Activated CD4-positive, alpha-beta memory T cell treated with anti-CD3 and anti-CD28 coated beads for 36 hours (primary cell): ENCODE measurements at regions of chr11 and their contacts with region 1.

Region 1: DNA sequence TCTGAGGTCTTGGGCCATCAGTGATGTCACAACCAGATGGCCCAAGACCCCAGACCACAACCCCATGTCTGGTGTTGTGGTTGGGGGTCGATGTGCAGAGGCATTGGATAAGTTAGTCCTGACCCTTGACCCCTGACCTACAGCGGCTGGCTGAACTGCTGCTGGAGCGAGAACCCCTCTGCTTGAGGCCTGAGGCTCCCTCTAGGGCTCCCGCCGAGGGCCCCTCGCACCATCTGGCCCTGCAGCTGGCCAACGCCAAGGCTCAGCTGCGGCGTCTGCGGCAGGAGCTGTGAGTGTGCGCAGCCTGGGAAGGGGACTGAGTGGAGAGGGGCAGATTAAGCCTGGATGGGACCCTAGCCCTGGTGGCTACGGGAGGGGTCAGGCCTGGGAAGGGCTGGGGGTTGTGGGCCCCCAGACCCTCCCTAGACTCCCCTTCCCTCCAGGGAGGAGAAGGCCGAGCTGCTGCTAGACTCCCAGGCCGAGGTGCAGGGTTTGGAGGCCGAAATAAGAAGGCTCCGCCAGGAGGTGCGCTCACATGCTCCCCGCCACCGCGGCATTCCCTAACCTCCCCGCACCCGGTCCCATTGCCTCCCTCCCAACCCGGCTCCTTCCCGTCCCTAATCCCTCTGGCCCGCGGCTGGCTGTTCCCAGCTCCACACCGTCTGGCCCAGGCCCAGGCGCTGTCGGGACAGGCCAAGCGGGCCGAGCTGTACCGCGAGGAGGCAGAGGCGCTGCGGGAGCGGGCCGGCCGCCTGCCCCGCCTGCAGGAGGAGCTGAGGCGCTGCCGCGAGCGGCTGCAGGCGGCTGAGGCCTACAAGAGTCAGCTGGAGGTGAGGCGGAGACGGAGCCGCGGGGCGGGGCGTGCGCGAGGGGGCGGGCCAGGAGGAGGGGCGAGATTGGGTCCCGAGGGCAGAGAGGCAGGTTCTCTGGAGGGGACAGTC is 2.1 kb downstream of the CCDC88B start:
- DNase-seq: peak; percentile 96
- H3K4me3 Mint-ChIP-seq: peak overlapping the region; percentile 37
- H3K27ac Mint-ChIP-seq: no peak overlapping the region
- H3K4me1 Mint-ChIP-seq: peaks cover 42% of the 10 kb centered on the region
- H3K27me3 Mint-ChIP-seq: no peaks in the 10 kb centered on the region

Region 2: DNA sequence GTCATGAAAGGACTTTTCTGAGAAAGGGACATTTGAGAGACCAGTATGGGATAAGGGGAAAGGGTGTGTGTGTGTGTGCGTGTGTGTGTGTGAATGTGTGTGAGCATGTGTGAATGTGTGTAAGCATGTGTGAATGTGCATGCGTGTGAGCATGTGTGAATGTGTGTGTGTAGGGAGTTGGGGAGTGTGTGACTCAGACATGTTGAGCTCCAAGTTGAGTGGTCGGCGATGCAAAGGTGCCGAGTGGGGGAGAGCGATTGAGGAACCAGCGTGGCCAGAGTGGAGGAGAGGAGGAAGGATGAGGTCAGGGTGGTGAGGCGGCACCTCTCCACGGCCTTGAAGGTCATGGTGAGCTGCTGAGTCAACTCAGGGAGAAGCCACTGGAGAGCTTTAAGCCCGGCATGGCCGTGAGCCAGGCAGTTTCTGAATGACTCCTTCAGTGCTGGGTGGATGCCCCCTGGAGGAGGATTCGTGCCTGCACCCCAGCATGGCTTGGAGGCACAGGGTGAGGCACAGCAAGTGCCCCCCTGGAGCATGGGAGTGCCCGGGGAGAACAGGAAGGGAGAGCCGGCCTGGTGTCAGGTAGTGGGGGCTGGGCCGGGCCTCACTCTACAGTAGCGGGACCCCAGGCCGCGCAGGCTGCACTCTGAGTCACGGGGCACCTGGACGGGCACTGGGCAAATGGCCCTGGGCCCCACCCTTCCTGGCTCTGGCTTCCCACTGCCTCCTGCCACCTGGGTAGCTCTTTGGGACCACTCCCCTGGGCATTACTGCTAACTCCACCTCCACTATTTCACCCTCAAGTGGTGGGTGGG is 10.4 kb before region 1 on chr11:
- CTCF ChIA-PET with region 1: interaction called, 34 read pairs
- POLR2A ChIA-PET with region 1: no interaction called
- intact Hi-C with region 1: no loop called
- DNase-seq: peak; percentile 90
- H3K4me3 Mint-ChIP-seq: no peak overlapping the region
- H3K27ac Mint-ChIP-seq: peak overlapping the region; percentile 47
- H3K4me1 Mint-ChIP-seq: peaks cover 18% of the 10 kb centered on the region
- H3K27me3 Mint-ChIP-seq: no peaks in the 10 kb centered on the region

Region 3: DNA sequence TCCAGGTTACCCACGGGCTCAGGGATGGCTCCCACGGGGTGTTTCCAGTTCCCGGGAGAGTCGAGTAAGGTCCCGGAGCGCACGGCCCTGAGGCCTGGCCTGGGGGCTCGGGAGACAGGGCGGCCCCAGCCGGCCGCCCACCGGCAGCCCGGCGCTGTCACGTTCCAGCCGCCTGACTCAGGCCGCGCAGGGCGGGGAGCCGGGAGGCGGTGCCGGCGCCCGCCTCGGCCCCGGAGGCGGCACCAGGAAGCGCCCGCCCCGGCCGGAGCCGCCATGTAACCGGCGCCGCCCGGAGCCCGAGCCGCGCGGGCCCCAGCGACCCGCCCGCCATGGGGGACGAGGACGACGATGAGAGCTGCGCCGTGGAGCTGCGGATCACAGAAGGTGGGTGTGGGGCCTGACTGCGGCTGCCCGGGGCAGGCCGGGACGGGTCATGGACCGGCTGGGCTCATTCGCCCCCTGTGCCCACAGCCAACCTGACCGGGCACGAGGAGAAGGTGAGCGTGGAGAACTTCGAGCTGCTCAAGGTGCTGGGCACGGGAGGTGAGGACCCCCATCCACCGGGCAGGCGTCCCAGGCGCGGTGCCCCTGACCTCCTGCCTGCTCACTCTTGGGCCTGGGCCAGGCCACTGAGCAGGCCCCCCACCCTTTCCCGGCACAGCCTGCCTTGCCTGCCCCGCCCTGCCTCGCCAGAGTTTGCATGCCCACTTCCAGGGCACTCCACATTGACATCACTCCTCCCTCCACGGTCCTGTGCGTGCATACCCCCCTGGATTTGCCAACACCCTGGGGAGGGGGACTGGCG is 17.0 kb after region 1 on chr11 and contains the start of gene RPS6KA4:
- CTCF ChIA-PET with region 1: interaction called, 9 read pairs
- POLR2A ChIA-PET with region 1: interaction called, 6 read pairs
- intact Hi-C with region 1: loop called (anchors 2 kb)
- DNase-seq: peak; percentile 68
- H3K4me3 Mint-ChIP-seq: peak within 1 kb of the TSS; percentile 91
- H3K27ac Mint-ChIP-seq: peak within 1 kb of the TSS; percentile 58
- H3K4me1 Mint-ChIP-seq: peaks cover 37% of the 10 kb centered on the region
- H3K27me3 Mint-ChIP-seq: no peaks in the 10 kb centered on the region
- total RNA-seq, gene RPS6KA4: 31.4 to 34.3 TPM